ENCODE measurements at regions of chr5 and their contacts with region 1.

Region 1: DNA sequence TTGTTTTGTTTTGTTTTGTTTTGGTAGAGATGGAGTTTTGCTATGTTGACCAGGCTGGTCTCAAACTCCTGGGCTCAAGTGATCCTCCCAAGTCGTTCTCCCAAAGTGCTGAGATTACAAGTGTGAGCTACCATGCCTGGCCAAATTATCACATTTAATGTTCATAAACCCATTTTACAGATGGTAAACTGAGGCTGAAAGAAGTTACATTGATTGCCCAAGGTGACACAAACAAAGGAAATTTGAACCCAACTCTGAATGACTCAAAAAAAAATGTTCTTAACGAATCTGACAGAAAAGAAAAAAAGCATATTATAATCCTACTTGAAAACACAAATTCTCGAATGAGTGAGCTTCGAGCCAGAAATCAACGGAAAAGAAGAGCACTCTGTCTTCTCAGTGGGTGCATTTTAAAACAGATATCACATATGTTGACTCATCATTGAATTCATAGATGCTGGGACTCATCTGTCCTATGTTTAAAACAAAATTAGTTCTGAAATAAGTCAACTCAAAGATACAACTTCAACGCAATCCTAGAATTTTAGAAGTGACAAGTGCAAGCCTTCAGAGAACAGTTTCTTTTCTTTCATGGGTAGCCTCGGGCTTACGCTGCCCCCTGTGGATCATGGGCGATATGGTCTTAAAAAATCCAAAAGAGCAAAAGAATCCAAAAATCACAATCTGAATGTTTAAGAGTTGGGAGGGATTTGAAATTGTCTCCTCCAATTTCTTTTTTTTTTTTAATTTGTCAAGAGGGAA is 28.4 kb downstream of the TIMD4 start:
- DNase-seq: peak; percentile 30 to 75 (median 48)
- ATAC-seq: peak; percentile 56
- H3K4me3 ChIP-seq: peak overlapping the region; percentile 19
- H3K4me3 Mint-ChIP-seq: peak overlapping the region; percentile 2
- H3K27ac ChIP-seq: no peak overlapping the region
- H3K27ac Mint-ChIP-seq: no peak overlapping the region
- H3K4me1 ChIP-seq: peaks cover 5% of the 10 kb centered on the region
- H3K4me1 Mint-ChIP-seq: peaks cover 24% of the 10 kb centered on the region
- H3K27me3 ChIP-seq: no peaks in the 10 kb centered on the region
- H3K27me3 Mint-ChIP-seq: no peaks in the 10 kb centered on the region
- CTCF ChIP-seq: peak; percentile 78

Region 2: GRCh38 chr5:154940772-154941620 is 1993.6 kb before region 1 on chr5 and contains the start of gene MRPL22:
- CTCF ChIA-PET with region 1: no interaction called
- POLR2A ChIA-PET with region 1: no interaction called
- intact Hi-C with region 1: loop called (anchors 2 to 10 kb)
- DNase-seq: peak; percentile 89 to 98 (median 94)
- ATAC-seq: peak; percentile 79
- H3K4me3 ChIP-seq: peak within 1 kb of the TSS; percentile 94
- H3K4me3 Mint-ChIP-seq: peak within 1 kb of the TSS; percentile 99
- H3K27ac ChIP-seq: peak within 1 kb of the TSS; percentile 68 to 75
- H3K27ac Mint-ChIP-seq: peak within 1 kb of the TSS; percentile 97
- H3K4me1 ChIP-seq: peaks cover 44% of the 10 kb centered on the region
- H3K4me1 Mint-ChIP-seq: peaks cover 52% of the 10 kb centered on the region
- H3K27me3 ChIP-seq: no peaks in the 10 kb centered on the region
- H3K27me3 Mint-ChIP-seq: no peaks in the 10 kb centered on the region
- CTCF ChIP-seq: no peak
- total RNA-seq, gene MRPL22: 29.9 to 30.2 TPM

Region 3: GRCh38 chr5:155616779-155617392 is 1317.7 kb before region 1 on chr5:
- CTCF ChIA-PET with region 1: no interaction called
- POLR2A ChIA-PET with region 1: no interaction called
- intact Hi-C with region 1: loop called in 1 of 2 experiments (anchors 10 kb)
- DNase-seq: peak in 11 of 14 experiments; percentile 2 to 38 (median 27)
- ATAC-seq: no peak
- H3K4me3 ChIP-seq: no peak overlapping the region
- H3K4me3 Mint-ChIP-seq: no peak overlapping the region
- H3K27ac ChIP-seq: no peak overlapping the region
- H3K27ac Mint-ChIP-seq: no peak overlapping the region
- H3K4me1 ChIP-seq: no peaks in the 10 kb centered on the region
- H3K4me1 Mint-ChIP-seq: no peaks in the 10 kb centered on the region
- H3K27me3 ChIP-seq: no peaks in the 10 kb centered on the region
- H3K27me3 Mint-ChIP-seq: peaks cover 22% of the 10 kb centered on the region
- CTCF ChIP-seq: peak; percentile 24

Region 4: GRCh38 chr5:156655732-156656131 is 278.9 kb before region 1 on chr5:
- CTCF ChIA-PET with region 1: no interaction called
- POLR2A ChIA-PET with region 1: no interaction called
- intact Hi-C with region 1: loop called in 1 of 2 experiments (anchors 10 kb)
- DNase-seq: no peak
- ATAC-seq: no peak
- H3K4me3 ChIP-seq: no peak overlapping the region
- H3K4me3 Mint-ChIP-seq: no peak overlapping the region
- H3K27ac ChIP-seq: no peak overlapping the region
- H3K27ac Mint-ChIP-seq: no peak overlapping the region
- H3K4me1 ChIP-seq: no peaks in the 10 kb centered on the region
- H3K4me1 Mint-ChIP-seq: no peaks in the 10 kb centered on the region
- H3K27me3 ChIP-seq: peaks cover 0 to 4% of the 10 kb centered on the region in 2 experiments
- H3K27me3 Mint-ChIP-seq: peaks cover 18% of the 10 kb centered on the region
- CTCF ChIP-seq: no peak

Region 5: GRCh38 chr5:156893517-156893916 is 41.1 kb before region 1 on chr5:
- CTCF ChIA-PET with region 1: no interaction called
- POLR2A ChIA-PET with region 1: no interaction called
- intact Hi-C with region 1: loop called in 1 of 2 experiments (anchors 5 kb)
- DNase-seq: no peak
- ATAC-seq: no peak
- H3K4me3 ChIP-seq: no peak overlapping the region
- H3K4me3 Mint-ChIP-seq: no peak overlapping the region
- H3K27ac ChIP-seq: no peak overlapping the region
- H3K27ac Mint-ChIP-seq: no peak overlapping the region
- H3K4me1 ChIP-seq: peaks cover 2% of the 10 kb centered on the region
- H3K4me1 Mint-ChIP-seq: peaks cover 19% of the 10 kb centered on the region
- H3K27me3 ChIP-seq: no peaks in the 10 kb centered on the region
- H3K27me3 Mint-ChIP-seq: no peaks in the 10 kb centered on the region
- CTCF ChIP-seq: no peak

Region 6: DNA sequence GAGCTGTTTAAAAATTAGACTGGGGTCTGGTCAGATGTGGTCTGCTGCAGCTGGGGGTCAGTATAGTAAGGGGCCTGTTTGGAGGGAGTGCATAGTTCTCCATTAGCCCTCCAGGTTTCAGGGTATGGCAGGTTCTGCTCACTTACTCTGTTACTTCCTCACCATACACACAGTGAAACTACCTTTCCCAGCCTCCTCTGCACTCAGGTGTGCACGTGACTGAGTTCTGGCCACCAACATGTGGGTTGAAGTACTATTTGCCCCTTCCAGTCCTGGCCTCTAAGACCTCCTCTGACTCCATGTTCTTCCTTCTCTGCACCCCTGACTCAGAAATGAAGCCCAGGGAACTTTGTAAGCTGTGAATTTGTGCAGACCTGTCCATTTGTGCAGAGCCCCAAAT is 1114.8 kb after region 1 on chr5:
- CTCF ChIA-PET with region 1: no interaction called
- POLR2A ChIA-PET with region 1: no interaction called
- intact Hi-C with region 1: no loop called
- DNase-seq: no peak
- ATAC-seq: no peak
- H3K4me3 ChIP-seq: no peak overlapping the region
- H3K4me3 Mint-ChIP-seq: no peak overlapping the region
- H3K27ac ChIP-seq: no peak overlapping the region
- H3K27ac Mint-ChIP-seq: no peak overlapping the region
- H3K4me1 ChIP-seq: no peaks in the 10 kb centered on the region
- H3K4me1 Mint-ChIP-seq: no peaks in the 10 kb centered on the region
- H3K27me3 ChIP-seq: peaks cover 0 to 4% of the 10 kb centered on the region in 2 experiments
- H3K27me3 Mint-ChIP-seq: peaks cover 23% of the 10 kb centered on the region
- CTCF ChIP-seq: no peak